ENCODE measurements at regions of chr11 and their contacts with region 1.

Region 1: GRCh38 chr11:67082035-67082791 is 25.6 kb downstream of the RHOD start:
- DNase-seq: no peak
- ATAC-seq: no peak
- H3K4me3 ChIP-seq: no peak overlapping the region
- H3K27ac ChIP-seq: peak overlapping the region in 1 of 2 experiments; percentile 56; a peak in 3 of 6 replicates
- H3K4me1 ChIP-seq: peaks cover 32% of the 10 kb centered on the region
- CTCF ChIP-seq: no peak
- EP300 ChIP-seq: no peak
- POLR2A ChIP-seq: no peak
- RAD21 ChIP-seq: no peak

Region 2: GRCh38 chr11:67060111-67060522 is 22.1 kb before region 1 on chr11:
- CTCF ChIA-PET with region 1: no interaction called
- POLR2A ChIA-PET with region 1: no interaction called
- DNase-seq: peak; percentile 52 to 91
- ATAC-seq: peak; percentile 61 to 69; a peak in 5 of 6 replicates
- H3K4me3 ChIP-seq: no peak overlapping the region
- H3K27ac ChIP-seq: peak overlapping the region; percentile 56 to 83
- H3K4me1 ChIP-seq: peaks cover 51% of the 10 kb centered on the region
- CTCF ChIP-seq: no peak
- EP300 ChIP-seq: no peak
- POLR2A ChIP-seq: no peak
- RAD21 ChIP-seq: peak in 1 of 2 experiments; percentile 21; a peak in 3 of 5 replicates

Region 3: GRCh38 chr11:67071420-67072284 is 10.6 kb before region 1 on chr11:
- CTCF ChIA-PET with region 1: interaction called, 33 read pairs
- POLR2A ChIA-PET with region 1: no interaction called
- DNase-seq: peak; percentile 82 to 94
- ATAC-seq: peak; percentile 91 to 92
- H3K4me3 ChIP-seq: peak overlapping the region; percentile 47
- H3K27ac ChIP-seq: peak overlapping the region; percentile 72 to 83
- H3K4me1 ChIP-seq: no peaks in the 10 kb centered on the region
- CTCF ChIP-seq: peak; percentile 65
- EP300 ChIP-seq: no peak
- POLR2A ChIP-seq: no peak
- RAD21 ChIP-seq: peak; percentile 63 to 70

Region 4: GRCh38 chr11:67095214-67095507 is 12.9 kb after region 1 on chr11:
- CTCF ChIA-PET with region 1: interaction called, 28 read pairs
- POLR2A ChIA-PET with region 1: no interaction called
- DNase-seq: no peak
- ATAC-seq: peak in 1 of 2 experiments; percentile 50; a peak in 3 of 6 replicates
- H3K4me3 ChIP-seq: no peak overlapping the region
- H3K27ac ChIP-seq: no peak overlapping the region
- H3K4me1 ChIP-seq: no peaks in the 10 kb centered on the region
- CTCF ChIP-seq: no peak
- EP300 ChIP-seq: no peak
- POLR2A ChIP-seq: no peak
- RAD21 ChIP-seq: no peak

Region 5: GRCh38 chr11:67118801-67119584 is 36.8 kb after region 1 on chr11 and contains the start of gene KDM2A:
- CTCF ChIA-PET with region 1: interaction called, 17 read pairs
- POLR2A ChIA-PET with region 1: interaction called, 3 read pairs
- DNase-seq: peak; percentile 99 to 100
- ATAC-seq: peak; percentile 75 to 85
- H3K4me3 ChIP-seq: peak within 1 kb of the TSS; percentile 86
- H3K27ac ChIP-seq: peak within 1 kb of the TSS; percentile 99 to 100
- H3K4me1 ChIP-seq: peaks cover 39% of the 10 kb centered on the region
- CTCF ChIP-seq: peak; percentile 38
- EP300 ChIP-seq: no peak
- POLR2A ChIP-seq: peak; percentile 45
- RAD21 ChIP-seq: peak; percentile 7 to 59; a peak in 3 of 5 replicates
- polyA plus RNA-seq, gene KDM2A: 42.8 and 48.0 TPM in 2 replicates

Region 6: GRCh38 chr11:67167086-67167485 is 84.9 kb after region 1 on chr11:
- CTCF ChIA-PET with region 1: interaction called, 39 read pairs
- POLR2A ChIA-PET with region 1: no interaction called
- DNase-seq: no peak
- ATAC-seq: no peak
- H3K4me3 ChIP-seq: no peak overlapping the region
- H3K27ac ChIP-seq: peak overlapping the region; percentile 47 to 66
- H3K4me1 ChIP-seq: peaks cover 32% of the 10 kb centered on the region
- CTCF ChIP-seq: no peak
- EP300 ChIP-seq: no peak
- POLR2A ChIP-seq: no peak
- RAD21 ChIP-seq: no peak

Region 7: DNA sequence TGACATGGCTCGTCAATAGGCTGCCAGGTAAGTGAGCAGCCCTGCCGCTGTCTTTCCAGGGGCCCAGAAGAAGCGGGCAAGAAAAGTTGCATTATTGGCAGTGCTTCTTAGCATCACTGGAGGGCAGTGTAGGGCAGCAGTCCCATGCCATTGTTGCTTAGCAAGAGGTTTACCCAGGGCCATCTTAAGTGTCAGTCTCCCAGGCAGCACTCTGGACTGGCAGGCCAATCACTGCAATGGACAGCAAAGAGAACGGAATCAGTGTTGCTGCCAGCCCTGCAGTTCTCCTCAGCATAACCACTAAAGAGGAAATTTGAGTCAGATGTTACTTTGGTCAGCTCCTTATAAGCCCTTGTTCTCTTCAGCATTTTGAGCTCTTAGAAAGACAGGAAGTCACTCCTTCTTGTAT is 170.6 kb after region 1 on chr11:
- CTCF ChIA-PET with region 1: interaction called, 10 read pairs
- POLR2A ChIA-PET with region 1: no interaction called
- DNase-seq: peak; percentile 49 to 80
- ATAC-seq: peak; percentile 75 to 82
- H3K4me3 ChIP-seq: no peak overlapping the region
- H3K27ac ChIP-seq: no peak overlapping the region
- H3K4me1 ChIP-seq: no peaks in the 10 kb centered on the region
- CTCF ChIP-seq: peak; percentile 40
- EP300 ChIP-seq: no peak
- POLR2A ChIP-seq: no peak
- RAD21 ChIP-seq: peak; percentile 37 to 50; a peak in 4 of 5 replicates

Region 8: DNA sequence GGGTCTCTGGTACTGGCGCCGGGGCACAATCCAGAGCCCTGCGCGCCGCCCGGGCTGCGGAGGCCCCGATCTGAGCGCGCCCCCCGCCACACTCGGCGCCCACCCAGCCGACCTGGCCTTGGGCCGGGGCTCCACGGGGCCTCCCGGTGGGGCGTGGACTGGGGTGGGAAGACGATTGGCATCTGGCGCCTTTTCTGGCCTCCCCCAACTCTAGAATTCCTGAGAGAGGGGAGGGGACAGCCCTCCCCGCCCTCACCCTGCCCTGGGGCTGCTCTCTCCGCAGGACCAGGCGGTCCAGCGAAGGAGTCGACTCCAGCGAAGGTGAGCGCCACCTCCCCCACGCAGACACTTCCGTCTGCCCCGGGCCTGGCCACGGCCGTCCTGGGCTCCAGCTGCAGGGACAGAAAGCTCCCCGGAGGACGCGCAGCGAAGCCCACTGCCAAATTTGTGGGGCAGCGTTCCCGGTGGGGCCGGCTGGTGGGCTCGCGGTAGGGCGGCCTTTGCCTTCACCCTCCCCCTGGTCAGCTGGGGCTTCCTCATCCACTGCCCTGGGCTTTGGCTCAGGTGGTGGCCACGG is 221.7 kb after region 1 on chr11:
- CTCF ChIA-PET with region 1: no interaction called
- POLR2A ChIA-PET with region 1: no interaction called
- DNase-seq: no peak
- ATAC-seq: peak; percentile 22 to 40; a peak in 5 of 6 replicates
- H3K4me3 ChIP-seq: peak overlapping the region; percentile 93
- H3K27ac ChIP-seq: peak overlapping the region; percentile 93 to 94
- H3K4me1 ChIP-seq: peaks cover 22% of the 10 kb centered on the region; the same call in 2 of the 3 replicates
- CTCF ChIP-seq: no peak
- EP300 ChIP-seq: no peak
- POLR2A ChIP-seq: no peak
- RAD21 ChIP-seq: no peak

Measured in A549 (cell line).